Activated CD4-positive, alpha-beta T cell treated with anti-CD3 and anti-CD28 coated beads for 36 hours (primary cell): ENCODE measurements at regions of chr6 and their contacts with region 1.

Region 1: DNA sequence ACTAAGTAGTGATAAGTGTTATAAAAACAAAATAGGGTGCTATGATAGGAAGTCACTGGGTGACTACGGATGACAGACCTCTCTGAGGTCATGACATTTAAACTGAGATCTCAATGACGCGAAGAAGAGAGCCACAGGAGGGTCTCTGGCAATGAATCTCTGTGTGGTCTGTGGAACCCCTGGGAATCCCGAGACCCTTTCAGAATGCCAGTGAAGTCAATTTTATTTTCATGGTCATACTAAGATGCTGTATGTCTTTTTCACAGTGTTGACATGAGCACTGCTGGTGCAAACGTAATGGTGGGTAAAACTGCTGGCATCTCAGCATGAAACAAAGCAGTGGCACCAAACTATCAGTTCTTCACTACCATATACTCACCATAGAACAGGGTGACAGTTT is 155.0 kb downstream of the GJA10 start:
- DNase-seq: peak; percentile 30
- ATAC-seq: peak; percentile 56
- H3K4me3 Mint-ChIP-seq: peak overlapping the region; percentile 35
- H3K27ac Mint-ChIP-seq: peak overlapping the region; percentile 89
- H3K4me1 Mint-ChIP-seq: peaks cover 58% of the 10 kb centered on the region
- H3K27me3 Mint-ChIP-seq: no peaks in the 10 kb centered on the region

Region 2: GRCh38 chr6:89763550-89763949 is 285.7 kb before region 1 on chr6:
- CTCF ChIA-PET with region 1: no interaction called
- POLR2A ChIA-PET with region 1: no interaction called
- intact Hi-C with region 1: no loop called
- DNase-seq: no peak
- ATAC-seq: no peak
- H3K4me3 Mint-ChIP-seq: no peak overlapping the region
- H3K27ac Mint-ChIP-seq: no peak overlapping the region
- H3K4me1 Mint-ChIP-seq: no peaks in the 10 kb centered on the region
- H3K27me3 Mint-ChIP-seq: no peaks in the 10 kb centered on the region

Region 3: GRCh38 chr6:90000864-90001731 is 48.2 kb before region 1 on chr6:
- CTCF ChIA-PET with region 1: no interaction called
- POLR2A ChIA-PET with region 1: no interaction called
- intact Hi-C with region 1: loop called in 1 of 2 experiments (anchors 2 kb)
- DNase-seq: peak; percentile 80
- ATAC-seq: peak; percentile 79
- H3K4me3 Mint-ChIP-seq: no peak overlapping the region
- H3K27ac Mint-ChIP-seq: no peak overlapping the region
- H3K4me1 Mint-ChIP-seq: peaks cover 35% of the 10 kb centered on the region
- H3K27me3 Mint-ChIP-seq: no peaks in the 10 kb centered on the region

Region 4: GRCh38 chr6:90025523-90026061 is 23.7 kb before region 1 on chr6:
- CTCF ChIA-PET with region 1: no interaction called
- POLR2A ChIA-PET with region 1: interaction called, 3 read pairs
- intact Hi-C with region 1: loop called (anchors 1 to 2 kb)
- DNase-seq: peak; percentile 77
- ATAC-seq: peak; percentile 93
- H3K4me3 Mint-ChIP-seq: peak overlapping the region; percentile 22
- H3K27ac Mint-ChIP-seq: peak overlapping the region; percentile 90
- H3K4me1 Mint-ChIP-seq: peaks cover 88% of the 10 kb centered on the region
- H3K27me3 Mint-ChIP-seq: no peaks in the 10 kb centered on the region

Region 5: GRCh38 chr6:90062667-90063066 is 13.4 kb after region 1 on chr6:
- CTCF ChIA-PET with region 1: interaction called, 6 read pairs
- POLR2A ChIA-PET with region 1: no interaction called
- intact Hi-C with region 1: loop called in 1 of 2 experiments (anchors 1 kb)
- DNase-seq: no peak
- ATAC-seq: no peak
- H3K4me3 Mint-ChIP-seq: no peak overlapping the region
- H3K27ac Mint-ChIP-seq: no peak overlapping the region
- H3K4me1 Mint-ChIP-seq: peaks cover 41% of the 10 kb centered on the region
- H3K27me3 Mint-ChIP-seq: no peaks in the 10 kb centered on the region

Region 6: DNA sequence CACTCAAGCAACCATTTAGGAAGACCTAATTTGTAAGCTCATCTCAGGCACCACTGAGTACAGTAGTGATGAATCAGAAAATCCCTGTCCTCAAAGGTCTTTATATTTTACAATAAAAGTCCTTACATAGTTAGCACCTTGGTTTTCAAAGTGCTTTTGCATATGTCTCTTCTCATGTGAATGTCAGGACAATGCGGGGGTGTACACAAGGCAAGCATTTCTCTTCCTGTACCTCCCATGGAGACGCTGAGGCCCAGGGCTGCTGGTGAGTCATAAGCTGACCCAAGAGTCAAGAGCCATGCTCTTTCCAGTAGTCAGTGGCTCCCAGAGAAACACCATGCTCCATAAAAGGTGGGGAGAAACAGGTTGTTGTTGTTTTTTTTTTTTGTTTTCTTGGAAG is 19.0 kb after region 1 on chr6:
- CTCF ChIA-PET with region 1: interaction called, 6 read pairs
- POLR2A ChIA-PET with region 1: no interaction called
- intact Hi-C with region 1: loop called in 1 of 2 experiments (anchors 2 kb)
- DNase-seq: peak; percentile 71
- ATAC-seq: peak; percentile 73
- H3K4me3 Mint-ChIP-seq: no peak overlapping the region
- H3K27ac Mint-ChIP-seq: peak overlapping the region; percentile 64
- H3K4me1 Mint-ChIP-seq: peaks cover 87% of the 10 kb centered on the region
- H3K27me3 Mint-ChIP-seq: no peaks in the 10 kb centered on the region

Region 7: DNA sequence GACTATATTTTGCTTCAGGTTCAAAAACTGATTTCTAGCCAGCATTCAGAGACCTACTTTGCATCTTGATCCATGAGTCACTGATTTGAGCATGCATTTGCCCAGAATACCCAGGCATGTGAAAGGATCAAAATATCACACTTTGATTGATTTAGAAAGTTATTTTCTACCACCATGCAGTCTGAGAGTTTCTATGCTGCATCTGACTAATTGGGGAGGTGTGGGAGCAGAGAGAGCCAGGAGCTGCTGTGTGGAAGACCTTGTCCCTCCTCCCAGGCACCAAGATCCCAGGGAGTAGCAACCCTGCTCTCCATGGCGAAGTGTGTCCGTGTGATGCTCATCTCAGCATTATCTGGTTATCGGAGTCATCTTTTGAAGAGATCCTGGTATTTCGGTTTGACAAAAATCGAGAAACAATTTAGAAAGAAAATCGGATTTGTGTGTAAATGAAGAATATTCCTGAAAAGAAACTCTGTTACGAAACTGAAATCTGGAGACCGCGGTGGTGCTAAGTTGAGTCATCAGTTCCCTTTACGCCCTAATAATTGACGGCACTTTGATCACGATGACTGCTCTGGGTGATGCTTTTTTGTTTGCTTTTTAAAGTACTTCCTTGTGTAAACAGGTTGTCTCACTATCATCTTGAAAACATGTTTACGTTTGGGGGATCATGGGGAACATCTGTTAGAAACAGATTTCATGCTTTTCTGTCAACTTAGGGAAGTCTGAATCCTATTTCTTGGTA is 53.9 kb after region 1 on chr6:
- CTCF ChIA-PET with region 1: no interaction called
- POLR2A ChIA-PET with region 1: interaction called, 3 read pairs
- intact Hi-C with region 1: loop called in 1 of 2 experiments (anchors 2 kb)
- DNase-seq: peak; percentile 58
- ATAC-seq: peak; percentile 80
- H3K4me3 Mint-ChIP-seq: peak overlapping the region; percentile 43
- H3K27ac Mint-ChIP-seq: peak overlapping the region; percentile 79
- H3K4me1 Mint-ChIP-seq: peaks cover 93% of the 10 kb centered on the region
- H3K27me3 Mint-ChIP-seq: no peaks in the 10 kb centered on the region